ENCODE measurements at regions of chr11 and their contacts with region 1.

Region 1: DNA sequence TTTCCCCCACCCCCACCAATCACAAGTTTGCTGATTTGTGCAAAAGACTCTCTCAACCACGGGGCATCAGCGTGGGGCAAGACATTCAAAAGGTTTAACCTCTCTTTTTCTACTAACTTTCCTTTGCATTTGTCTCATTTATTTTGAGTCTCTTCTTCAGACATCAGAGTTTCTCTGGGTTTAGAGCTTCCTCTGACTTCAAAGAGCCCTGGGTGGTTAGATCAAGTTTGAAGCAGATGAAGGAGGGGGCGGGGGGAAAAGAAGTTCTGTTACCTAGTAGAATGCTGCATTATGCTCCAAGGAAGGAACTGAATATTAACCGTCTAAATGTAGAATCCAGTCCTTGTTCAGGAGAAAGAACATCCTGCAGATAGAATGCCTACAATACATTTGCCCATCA is 24.5 kb downstream of the GAS2 start:
- DNase-seq: no peak
- H3K4me3 ChIP-seq: no peak overlapping the region
- CTCF ChIP-seq: no peak

Region 2: DNA sequence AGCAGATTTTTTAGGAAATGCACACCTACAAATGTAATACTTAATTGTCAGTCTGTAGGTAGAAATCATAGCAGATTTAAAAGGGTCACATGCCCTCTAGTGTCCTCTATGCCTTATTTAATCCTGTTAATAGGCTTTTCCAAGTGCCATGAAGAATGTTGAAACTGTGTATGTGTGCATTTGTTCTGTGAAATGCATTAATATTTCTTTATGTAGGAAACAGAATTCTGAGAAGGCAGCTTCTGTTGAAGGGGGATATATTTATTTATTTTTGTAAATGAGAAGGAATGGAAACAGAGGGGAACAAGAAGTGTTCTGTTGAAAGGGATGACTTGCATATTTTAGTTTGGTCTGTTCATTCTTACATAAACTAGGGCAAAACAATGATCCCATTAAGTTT is 87.8 kb after region 1 on chr11:
- in situ Hi-C with region 1: loop called (anchors 5 kb)
- DNase-seq: no peak
- H3K4me3 ChIP-seq: no peak overlapping the region
- CTCF ChIP-seq: no peak